Panc1 (cell line): ENCODE measurements at regions of chr22 and their contacts with region 1.

Region 1: GRCh38 chr22:50030297-50031188 is 18.0 kb upstream of the IL17REL start:
- DNase-seq: no peak
- ATAC-seq: peak; percentile 85
- H3K4me3 ChIP-seq: peak overlapping the region; percentile 18 to 24; a peak in 3 of 4 replicates
- H3K27ac ChIP-seq: no peak overlapping the region
- H3K4me1 ChIP-seq: peaks cover 9% of the 10 kb centered on the region
- H3K27me3 ChIP-seq: no peaks in the 10 kb centered on the region
- CTCF ChIP-seq: peak; percentile 96

Region 2: DNA sequence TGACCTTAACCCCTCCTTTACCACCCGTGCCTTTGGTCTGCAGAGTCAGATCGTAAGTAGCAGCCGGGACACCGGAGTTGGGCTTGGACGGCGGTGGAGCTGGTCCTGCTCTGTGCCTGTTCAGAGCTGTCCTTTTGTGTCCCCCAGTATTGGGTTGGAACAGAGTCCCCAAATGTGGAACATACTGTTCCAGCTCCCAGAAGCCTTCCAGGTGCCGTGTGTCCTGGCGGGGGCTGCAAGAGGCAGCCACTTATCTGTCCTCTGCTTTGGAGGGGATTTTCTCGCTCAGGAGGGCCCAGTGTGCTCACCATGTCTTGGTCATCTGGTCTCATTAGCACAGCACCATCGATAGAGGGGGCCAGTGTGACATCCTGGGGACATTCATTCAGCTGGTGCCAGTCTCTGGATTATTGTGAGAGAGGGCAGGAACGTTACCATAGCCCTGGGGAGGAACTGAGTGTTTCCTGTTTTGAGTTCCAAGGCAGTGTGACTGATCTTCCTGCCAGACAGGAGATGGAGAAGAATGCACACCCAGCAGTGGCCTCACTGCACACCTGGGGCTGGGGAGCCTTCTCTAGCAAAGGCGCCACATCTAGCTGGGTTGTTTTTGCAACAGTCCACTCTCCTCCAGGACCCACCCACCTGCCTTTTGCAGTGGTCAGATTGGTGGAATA is 99.7 kb before region 1 on chr22:
- CTCF ChIA-PET with region 1: interaction called, 16 read pairs
- POLR2A ChIA-PET with region 1: no interaction called
- in situ Hi-C with region 1: no loop called
- intact Hi-C with region 1: loop called (anchors 5 kb)
- DNase-seq: no peak
- ATAC-seq: peak; percentile 81
- H3K4me3 ChIP-seq: no peak overlapping the region; a peak in 1 of 4 replicates
- H3K27ac ChIP-seq: peak overlapping the region; percentile 44
- H3K4me1 ChIP-seq: peaks cover 32% of the 10 kb centered on the region
- H3K27me3 ChIP-seq: no peaks in the 10 kb centered on the region
- CTCF ChIP-seq: peak; percentile 88

Region 3: DNA sequence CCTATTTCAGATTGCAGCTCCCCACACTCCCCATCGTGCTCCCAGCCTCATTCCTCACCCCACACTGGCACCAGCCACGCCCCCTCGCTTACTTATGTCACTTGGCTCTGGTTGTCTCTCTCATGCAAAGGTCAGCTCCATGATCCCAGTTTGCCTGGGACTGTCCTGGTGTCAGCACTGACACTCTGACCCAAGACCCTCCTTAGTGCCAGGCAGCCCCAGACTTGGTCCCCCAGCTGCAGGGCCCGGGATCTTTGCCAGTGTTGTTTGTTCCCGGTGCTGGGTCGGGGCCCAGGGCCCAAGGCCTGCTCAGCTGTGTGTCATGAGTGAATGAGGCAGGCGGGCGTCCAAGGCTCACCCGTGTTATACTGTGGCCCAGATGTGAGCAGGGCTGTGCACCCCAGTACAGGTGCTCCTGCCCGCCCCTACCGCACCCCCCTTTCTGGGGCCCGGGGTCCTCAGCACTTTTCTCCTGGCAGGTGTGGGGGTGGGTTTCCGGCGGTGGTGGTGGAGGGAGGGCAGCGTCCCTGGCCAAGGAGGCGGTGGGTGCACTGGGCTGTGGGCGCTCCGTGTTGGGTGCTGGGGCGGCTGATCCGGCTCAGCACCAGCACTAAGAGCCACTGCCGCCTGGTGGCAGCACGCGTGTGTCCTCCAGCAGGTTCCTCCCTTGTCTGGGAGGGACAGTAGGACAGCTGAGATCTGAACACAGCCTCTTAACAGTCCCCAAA is 37.5 kb before region 1 on chr22:
- CTCF ChIA-PET with region 1: interaction called, 6 read pairs
- POLR2A ChIA-PET with region 1: no interaction called
- in situ Hi-C with region 1: no loop called
- intact Hi-C with region 1: loop called (anchors 5 kb)
- DNase-seq: no peak
- ATAC-seq: peak; percentile 86
- H3K4me3 ChIP-seq: no peak overlapping the region
- H3K27ac ChIP-seq: no peak overlapping the region
- H3K4me1 ChIP-seq: peaks cover 24% of the 10 kb centered on the region
- H3K27me3 ChIP-seq: no peaks in the 10 kb centered on the region
- CTCF ChIP-seq: peak; percentile 85

Region 4: GRCh38 chr22:50014053-50014501 is 16.5 kb before region 1 on chr22:
- CTCF ChIA-PET with region 1: interaction called, 11 read pairs
- POLR2A ChIA-PET with region 1: no interaction called
- in situ Hi-C with region 1: no loop called
- intact Hi-C with region 1: no loop called
- DNase-seq: no peak
- ATAC-seq: no peak; the same call in 1 of the 2 replicates
- H3K4me3 ChIP-seq: no peak overlapping the region
- H3K27ac ChIP-seq: no peak overlapping the region
- H3K4me1 ChIP-seq: peaks cover 20% of the 10 kb centered on the region
- H3K27me3 ChIP-seq: no peaks in the 10 kb centered on the region
- CTCF ChIP-seq: no peak

Region 5: GRCh38 chr22:50089682-50090411 is 59.3 kb after region 1 on chr22 and contains the start of gene MOV10L1:
- CTCF ChIA-PET with region 1: no interaction called
- POLR2A ChIA-PET with region 1: no interaction called
- in situ Hi-C with region 1: no loop called
- intact Hi-C with region 1: no loop called
- DNase-seq: no peak
- ATAC-seq: no peak
- H3K4me3 ChIP-seq: no peak within 1 kb of the TSS
- H3K27ac ChIP-seq: no peak within 1 kb of the TSS
- H3K4me1 ChIP-seq: no peaks in the 10 kb centered on the region
- H3K27me3 ChIP-seq: no peaks in the 10 kb centered on the region
- CTCF ChIP-seq: no peak
- total RNA-seq, gene MOV10L1: 0.10 TPM

Region 6: GRCh38 chr22:50111056-50111455 is 80.5 kb after region 1 on chr22:
- CTCF ChIA-PET with region 1: no interaction called
- POLR2A ChIA-PET with region 1: interaction called, 11 read pairs
- in situ Hi-C with region 1: no loop called
- intact Hi-C with region 1: no loop called
- DNase-seq: no peak
- ATAC-seq: no peak
- H3K4me3 ChIP-seq: no peak overlapping the region
- H3K27ac ChIP-seq: no peak overlapping the region
- H3K4me1 ChIP-seq: peaks cover 6% of the 10 kb centered on the region; the same call in 1 of the 2 replicates
- H3K27me3 ChIP-seq: no peaks in the 10 kb centered on the region
- CTCF ChIP-seq: no peak